ENCODE measurements at regions of chr4 and their contacts with region 1.

Region 1: GRCh38 chr4:56435306-56435926 is at the start of gene PPAT:
- DNase-seq: peak; percentile 95
- ATAC-seq: peak; percentile 93
- H3K4me3 ChIP-seq: peak within 1 kb of the TSS; percentile 59
- H3K27ac ChIP-seq: peak within 1 kb of the TSS; percentile 79
- H3K4me1 ChIP-seq: no peaks in the 10 kb centered on the region
- H3K27me3 ChIP-seq: no peaks in the 10 kb centered on the region
- CTCF ChIP-seq: 0 out of 2 replicates have a peak, but pooled peaks have one; percentile 20
- POLR2A ChIP-seq: no peak; the same call in 1 of the 2 replicates
- RAD21 ChIP-seq: no peak
- total RNA-seq, gene PPAT: 21.1 and 32.2 TPM in 2 replicates

Region 2: GRCh38 chr4:56387023-56388001 is 48.1 kb before region 1 on chr4 and contains the start of gene AASDH:
- CTCF ChIA-PET with region 1: no interaction called
- POLR2A ChIA-PET with region 1: interaction called, 7 read pairs
- dilution Hi-C with region 1: no loop called
- in situ Hi-C with region 1: no loop called
- intact Hi-C with region 1: loop called (anchors 2 kb)
- DNase-seq: peak; percentile 95
- ATAC-seq: peak; percentile 93
- H3K4me3 ChIP-seq: peak within 1 kb of the TSS; percentile 61
- H3K27ac ChIP-seq: peak within 1 kb of the TSS; percentile 89
- H3K4me1 ChIP-seq: peaks cover 3% of the 10 kb centered on the region; the same call in 1 of the 2 replicates
- H3K27me3 ChIP-seq: no peaks in the 10 kb centered on the region
- CTCF ChIP-seq: no peak
- POLR2A ChIP-seq: peak; percentile 93
- RAD21 ChIP-seq: no peak
- total RNA-seq, gene AASDH: 12.0 and 13.1 TPM in 2 replicates

Region 3: GRCh38 chr4:56467284-56468096 is 32.1 kb after region 1 on chr4 and contains the start of gene SRP72:
- CTCF ChIA-PET with region 1: no interaction called
- POLR2A ChIA-PET with region 1: interaction called, 6 read pairs
- dilution Hi-C with region 1: no loop called
- in situ Hi-C with region 1: no loop called
- intact Hi-C with region 1: loop called (anchors 2 kb)
- DNase-seq: peak; percentile 85
- ATAC-seq: peak; percentile 91
- H3K4me3 ChIP-seq: peak within 1 kb of the TSS; percentile 98
- H3K27ac ChIP-seq: peak within 1 kb of the TSS; percentile 99
- H3K4me1 ChIP-seq: peaks cover 6% of the 10 kb centered on the region
- H3K27me3 ChIP-seq: no peaks in the 10 kb centered on the region
- CTCF ChIP-seq: no peak
- POLR2A ChIP-seq: peak; percentile 95
- RAD21 ChIP-seq: no peak
- total RNA-seq, gene SRP72: 123 and 197 TPM in 2 replicates

Region 4: DNA sequence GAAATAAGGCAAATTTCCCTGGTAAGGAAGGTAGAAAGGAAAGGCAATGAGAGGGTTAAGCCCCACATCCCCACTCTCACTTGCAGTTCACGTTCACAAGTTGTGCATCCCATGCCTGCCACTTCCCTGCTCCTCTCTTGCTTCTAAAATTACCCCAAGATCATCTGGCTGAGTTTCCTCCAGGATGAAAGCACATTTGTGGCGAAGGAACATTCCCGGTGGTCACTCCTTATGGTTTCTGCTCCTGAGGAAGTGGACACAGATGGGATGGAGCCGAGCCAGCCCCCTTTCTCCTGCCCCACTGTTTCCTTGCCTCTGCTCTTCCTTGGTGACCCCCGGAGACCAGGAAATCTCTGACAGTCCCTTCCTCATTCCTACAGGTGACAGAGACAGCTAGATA is 348.6 kb after region 1 on chr4:
- CTCF ChIA-PET with region 1: no interaction called
- POLR2A ChIA-PET with region 1: no interaction called
- dilution Hi-C with region 1: no loop called
- in situ Hi-C with region 1: no loop called
- intact Hi-C with region 1: no loop called
- DNase-seq: no peak
- ATAC-seq: no peak
- H3K4me3 ChIP-seq: no peak overlapping the region
- H3K27ac ChIP-seq: no peak overlapping the region
- H3K4me1 ChIP-seq: peaks cover 7% of the 10 kb centered on the region
- H3K27me3 ChIP-seq: peaks cover 13% of the 10 kb centered on the region
- CTCF ChIP-seq: no peak
- POLR2A ChIP-seq: no peak
- RAD21 ChIP-seq: no peak

Measured in IMR-90 (cell line).